Naive thymus-derived CD8-positive, alpha-beta T cell (primary cell): ENCODE measurements at regions of chr3 and their contacts with region 1.

Region 1: GRCh38 chr3:196517919-196518318 is 2.8 kb upstream of the SMCO1 start:
- DNase-seq: no peak
- ATAC-seq: no peak
- H3K4me3 Mint-ChIP-seq: no peak overlapping the region
- H3K27ac Mint-ChIP-seq: no peak overlapping the region
- H3K4me1 Mint-ChIP-seq: no peaks in the 10 kb centered on the region
- H3K27me3 Mint-ChIP-seq: peaks cover 0 to 5% (median 0%) of the 10 kb centered on the region in 5 donors

Region 2: GRCh38 chr3:196603683-196604082 is 85.8 kb after region 1 on chr3:
- POLR2A ChIA-PET with region 1: interaction called, 12 read pairs
- DNase-seq: no peak
- ATAC-seq: no peak
- H3K4me3 Mint-ChIP-seq: peak overlapping the region in 1 of 10 donors; percentile 12
- H3K27ac Mint-ChIP-seq: peak overlapping the region in 1 of 10 donors; percentile 56
- H3K4me1 Mint-ChIP-seq: peaks cover 2 to 15% (median 10%) of the 10 kb centered on the region in 4 donors
- H3K27me3 Mint-ChIP-seq: no peaks in the 10 kb centered on the region